ENCODE measurements at regions of chr1 and their contacts with region 1.

Region 1: DNA sequence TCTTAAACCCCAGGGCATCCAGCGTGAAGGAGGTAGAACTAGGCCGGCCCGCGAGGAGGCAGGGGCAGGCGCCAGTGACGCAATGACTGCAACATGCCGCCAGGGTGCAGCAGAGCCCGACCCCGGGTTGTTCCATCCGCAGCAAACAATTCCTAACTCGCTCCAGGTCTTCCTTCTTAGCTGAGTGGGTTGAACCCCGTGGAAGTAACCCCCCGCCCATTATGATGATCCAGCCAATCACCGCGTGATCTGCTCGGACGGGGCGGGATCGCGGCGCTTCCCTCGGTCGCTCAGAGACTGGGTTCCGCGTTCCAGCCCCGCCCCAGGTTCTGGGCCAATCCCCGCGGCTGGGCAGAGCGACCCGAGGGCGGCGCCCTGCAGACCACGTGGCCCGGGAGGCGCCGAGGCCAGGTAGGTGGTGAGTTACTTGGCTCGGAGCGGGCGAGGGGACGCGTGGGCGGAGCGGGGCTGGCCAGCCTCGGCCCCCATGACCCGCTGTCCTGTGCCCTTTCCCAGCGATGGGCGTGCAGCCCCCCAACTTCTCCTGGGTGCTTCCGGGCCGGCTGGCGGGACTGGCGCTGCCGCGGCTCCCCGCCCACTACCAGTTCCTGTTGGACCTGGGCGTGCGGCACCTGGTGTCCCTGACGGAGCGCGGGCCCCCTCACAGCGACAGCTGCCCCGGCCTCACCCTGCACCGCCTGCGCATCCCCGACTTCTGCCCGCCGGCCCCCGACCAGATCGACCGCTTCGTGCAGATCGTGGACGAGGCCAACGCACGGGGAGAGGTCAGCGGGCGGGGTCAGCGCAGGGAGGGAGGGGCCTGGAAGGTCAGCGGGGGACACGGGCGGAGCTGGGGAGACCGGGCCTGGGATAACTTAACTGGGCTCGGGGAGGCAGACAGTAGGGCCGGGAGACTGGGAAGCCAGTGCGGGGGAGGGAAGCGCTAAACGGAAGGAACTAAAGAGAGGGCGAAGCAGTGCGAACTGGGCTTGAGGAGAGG is at the start of gene DUSP23:
- DNase-seq: peak; percentile 99
- H3K27ac ChIP-seq: peak within 1 kb of the TSS; percentile 81
- CTCF ChIP-seq: peak; percentile 95

Region 2: GRCh38 chr1:159891275-159892157 is 110.6 kb after region 1 on chr1:
- CTCF ChIA-PET with region 1: interaction called, 16 read pairs
- POLR2A ChIA-PET with region 1: interaction called, 3 read pairs
- DNase-seq: peak; percentile 80
- H3K27ac ChIP-seq: peak overlapping the region; percentile 90
- CTCF ChIP-seq: peak; percentile 98

Measured in RWPE1 (cell line).